Heart right ventricle (tissue), 16 donors: ENCODE measurements at regions of chr1 and their contacts with region 1.

Region 1: GRCh38 chr1:39408641-39409054 is 82.8 kb upstream of the BMP8A start:
- DNase-seq: peak; percentile 96 to 97
- ATAC-seq: peak; percentile 91 to 97 (median 94)
- H3K4me3 ChIP-seq: peak overlapping the region; percentile 40 to 95 (median 88)
- H3K27ac ChIP-seq: peak overlapping the region; percentile 82 to 98 (median 94)
- H3K4me1 ChIP-seq: peaks cover 21 to 82% (median 77%) of the 10 kb centered on the region in 9 donors
- H3K27me3 ChIP-seq: no peaks in the 10 kb centered on the region
- CTCF ChIP-seq: peak in 2 of 9 donors; percentile 17 to 22

Region 2: GRCh38 chr1:39354572-39354971 is 54.1 kb before region 1 on chr1:
- intact Hi-C with region 1: loop called in 1 of 10 experiments (anchors 5 kb)
- DNase-seq: no peak
- ATAC-seq: no peak
- H3K4me3 ChIP-seq: no peak overlapping the region
- H3K27ac ChIP-seq: no peak overlapping the region
- H3K4me1 ChIP-seq: peaks cover 0 to 14% (median 8%) of the 10 kb centered on the region in 9 donors
- H3K27me3 ChIP-seq: no peaks in the 10 kb centered on the region
- CTCF ChIP-seq: peak in 1 of 9 donors; percentile 8

Region 3: GRCh38 chr1:39360731-39361130 is 47.9 kb before region 1 on chr1:
- intact Hi-C with region 1: loop called in 2 of 10 experiments (anchors 5 to 10 kb)
- DNase-seq: no peak
- ATAC-seq: no peak
- H3K4me3 ChIP-seq: no peak overlapping the region
- H3K27ac ChIP-seq: no peak overlapping the region
- H3K4me1 ChIP-seq: peaks cover 0 to 26% (median 10%) of the 10 kb centered on the region in 9 donors
- H3K27me3 ChIP-seq: no peaks in the 10 kb centered on the region
- CTCF ChIP-seq: no peak

Region 4: GRCh38 chr1:39370602-39371001 is 38.0 kb before region 1 on chr1:
- intact Hi-C with region 1: loop called in 4 of 10 experiments (anchors 5 to 10 kb)
- DNase-seq: no peak
- ATAC-seq: no peak
- H3K4me3 ChIP-seq: no peak overlapping the region
- H3K27ac ChIP-seq: no peak overlapping the region
- H3K4me1 ChIP-seq: peaks cover 0 to 13% (median 0%) of the 10 kb centered on the region in 9 donors
- H3K27me3 ChIP-seq: no peaks in the 10 kb centered on the region
- CTCF ChIP-seq: no peak

Region 5: DNA sequence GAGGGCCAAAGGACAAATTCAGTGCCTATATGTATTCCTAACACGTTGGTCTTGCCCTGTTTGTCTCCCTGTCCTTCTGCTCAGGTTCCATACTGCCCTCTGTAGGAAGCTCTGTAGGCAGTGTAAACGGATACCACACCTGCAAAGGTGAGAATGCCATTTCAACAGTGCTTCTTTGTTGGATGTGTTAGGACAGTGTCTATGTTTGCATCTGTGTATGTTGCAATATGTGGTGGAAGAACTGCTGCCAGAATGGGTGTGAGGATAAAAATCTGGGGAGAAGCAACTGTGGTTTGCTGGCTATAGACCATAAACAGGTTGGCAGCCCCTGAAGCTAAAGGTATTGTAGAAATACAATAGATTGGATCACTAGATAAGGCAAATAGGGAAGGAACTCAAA is 30.3 kb before region 1 on chr1:
- intact Hi-C with region 1: loop called in 3 of 10 experiments (anchors 5 kb)
- DNase-seq: no peak
- ATAC-seq: no peak
- H3K4me3 ChIP-seq: no peak overlapping the region
- H3K27ac ChIP-seq: no peak overlapping the region
- H3K4me1 ChIP-seq: peaks cover 0 to 10% (median 7%) of the 10 kb centered on the region in 9 donors
- H3K27me3 ChIP-seq: no peaks in the 10 kb centered on the region
- CTCF ChIP-seq: peak in 5 of 9 donors; percentile 24 to 35 (median 35)

Region 6: DNA sequence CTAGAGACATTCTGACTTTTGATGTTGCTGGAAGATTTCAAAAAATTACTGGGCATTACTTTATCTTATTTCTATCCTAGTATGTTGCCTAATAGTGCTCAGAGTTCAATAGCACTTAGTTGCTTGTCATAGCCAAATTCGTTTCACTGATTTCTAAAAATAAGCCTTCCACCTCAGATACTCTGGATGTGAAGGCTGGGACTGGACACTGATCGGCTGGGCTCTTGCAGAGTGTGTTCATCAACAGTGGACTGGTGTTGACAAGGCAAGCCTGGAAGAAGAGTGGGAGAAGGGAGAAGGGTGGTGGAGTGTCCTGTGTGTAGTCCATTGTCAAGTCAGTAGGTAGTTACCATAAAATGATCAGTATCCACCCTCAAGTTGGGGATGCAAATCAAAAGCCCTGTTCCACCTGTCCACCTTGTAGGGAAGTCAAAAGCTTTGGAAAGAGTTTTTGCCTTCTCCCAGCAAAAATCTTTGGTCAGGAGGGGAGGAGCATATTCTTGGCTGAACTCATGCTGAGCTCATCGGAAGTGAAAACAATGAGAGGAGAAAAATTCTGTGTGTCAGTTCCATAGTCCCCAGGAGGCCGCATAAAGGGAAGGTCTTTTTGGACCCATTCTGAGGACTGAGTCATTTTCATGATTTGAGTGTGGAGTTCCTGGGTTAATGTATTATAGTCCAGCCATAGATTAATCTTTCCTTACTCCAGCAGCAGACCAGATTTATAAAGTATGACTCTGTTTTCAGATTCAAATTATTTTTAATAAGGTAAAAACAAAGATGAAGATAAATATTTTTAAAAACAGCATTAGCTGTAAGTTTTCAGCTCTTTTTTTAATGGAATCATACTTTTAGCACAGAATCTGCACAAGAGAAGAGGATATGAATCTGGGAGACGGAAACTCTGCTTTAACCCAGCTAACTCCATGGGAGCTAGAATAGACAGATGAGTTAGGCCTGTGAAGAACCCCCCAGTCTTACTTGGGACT is 16.7 kb before region 1 on chr1:
- intact Hi-C with region 1: loop called in 2 of 10 experiments (anchors 2 kb)
- DNase-seq: peak in 1 of 2 donors; percentile 73
- ATAC-seq: peak; percentile 67 to 92 (median 86)
- H3K4me3 ChIP-seq: peak overlapping the region in 1 of 10 donors; percentile 0
- H3K27ac ChIP-seq: peak overlapping the region; percentile 20 to 93 (median 78)
- H3K4me1 ChIP-seq: peaks cover 15 to 76% (median 64%) of the 10 kb centered on the region in 9 donors
- H3K27me3 ChIP-seq: no peaks in the 10 kb centered on the region
- CTCF ChIP-seq: no peak

Region 7: GRCh38 chr1:39485046-39485803 is 76.6 kb after region 1 on chr1:
- intact Hi-C with region 1: no loop called
- DNase-seq: peak; percentile 41 to 49
- ATAC-seq: peak in 7 of 8 donors; percentile 29 to 80 (median 61)
- H3K4me3 ChIP-seq: no peak overlapping the region
- H3K27ac ChIP-seq: peak overlapping the region in 7 of 10 donors; percentile 23 to 71 (median 61)
- H3K4me1 ChIP-seq: peaks cover 0 to 18% (median 3%) of the 10 kb centered on the region in 9 donors
- H3K27me3 ChIP-seq: peaks cover 0 to 1% (median 0%) of the 10 kb centered on the region in 7 donors
- CTCF ChIP-seq: no peak